T-cell (primary cell): ENCODE measurements at regions of chr13 and their contacts with region 1.

Region 1: DNA sequence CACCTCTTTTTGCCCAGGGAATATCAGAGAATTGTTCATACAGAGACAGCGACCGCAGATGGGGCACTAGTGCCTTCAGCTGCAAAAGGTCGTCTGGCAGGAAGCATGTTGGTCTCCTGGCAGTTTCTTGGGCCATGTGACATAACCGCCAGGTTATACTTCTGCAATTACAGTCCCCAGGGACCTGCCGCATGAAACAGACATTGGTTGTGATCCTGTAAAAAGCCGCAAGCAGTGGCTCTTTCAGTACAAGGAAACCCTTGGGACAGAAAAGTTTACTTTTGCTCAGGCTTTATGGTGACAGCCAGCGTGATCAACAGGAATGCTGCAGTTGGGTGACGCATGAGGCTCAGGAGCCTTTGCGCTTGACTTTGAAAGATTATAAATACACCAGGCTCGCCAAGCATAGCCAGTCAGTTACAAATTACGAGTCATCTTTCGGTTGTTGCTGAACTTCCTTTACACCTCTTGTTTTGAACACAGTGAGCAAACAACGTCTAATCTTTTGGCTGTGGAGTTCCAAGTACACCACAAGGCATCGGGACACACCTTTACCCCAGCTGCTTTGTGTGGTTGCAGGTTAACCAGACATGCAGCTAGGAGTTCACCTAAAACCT is 50.5 kb upstream of the UBE2L5 start:
- DNase-seq: peak; percentile 52 to 89 (median 70)
- ATAC-seq: peak; percentile 63 to 74 (median 68)
- H3K4me3 ChIP-seq: peak overlapping the region in 1 of 2 donors; percentile 17
- H3K4me3 Mint-ChIP-seq: peak overlapping the region; percentile 46 to 79 (median 67)
- H3K27ac ChIP-seq: peak overlapping the region; percentile 74
- H3K27ac Mint-ChIP-seq: peak overlapping the region; percentile 97
- H3K4me1 ChIP-seq: peaks cover 62 to 88% of the 10 kb centered on the region in 2 experiments
- H3K4me1 Mint-ChIP-seq: peaks cover 83 to 87% (median 84%) of the 10 kb centered on the region in 3 donors
- H3K27me3 ChIP-seq: no peaks in the 10 kb centered on the region
- H3K27me3 Mint-ChIP-seq: no peaks in the 10 kb centered on the region

Region 2: GRCh38 chr13:29210676-29211075 is 1161.1 kb before region 1 on chr13:
- CTCF ChIA-PET with region 1: no interaction called
- POLR2A ChIA-PET with region 1: no interaction called
- DNase-seq: no peak
- ATAC-seq: no peak
- H3K4me3 ChIP-seq: no peak overlapping the region
- H3K4me3 Mint-ChIP-seq: no peak overlapping the region
- H3K27ac ChIP-seq: no peak overlapping the region
- H3K27ac Mint-ChIP-seq: no peak overlapping the region
- H3K4me1 ChIP-seq: no peaks in the 10 kb centered on the region
- H3K4me1 Mint-ChIP-seq: no peaks in the 10 kb centered on the region
- H3K27me3 ChIP-seq: no peaks in the 10 kb centered on the region
- H3K27me3 Mint-ChIP-seq: no peaks in the 10 kb centered on the region

Region 3: DNA sequence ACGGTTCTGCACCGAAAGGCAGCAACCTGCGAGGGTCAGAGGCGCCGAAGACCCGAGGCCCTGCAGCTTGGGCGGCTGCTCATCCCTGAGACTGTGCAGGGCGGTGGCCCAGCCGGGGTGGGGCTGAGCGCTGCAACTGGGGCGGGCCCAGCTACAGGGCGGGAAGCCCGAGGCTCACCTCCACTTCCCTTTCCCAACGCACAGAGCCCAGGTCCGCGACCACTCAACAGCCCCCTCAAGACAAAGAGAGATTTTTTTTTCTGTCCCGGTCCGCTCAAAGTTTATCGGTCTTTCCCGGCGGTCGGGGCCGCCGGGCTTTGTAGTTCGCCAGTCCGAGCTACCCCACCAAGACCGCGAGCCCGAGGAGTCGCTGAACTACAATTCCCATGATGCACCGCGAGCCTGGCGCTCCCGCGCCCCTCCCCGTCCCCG is 65.0 kb before region 1 on chr13:
- CTCF ChIA-PET with region 1: interaction called in 1 of 2 experiments, 11 read pairs
- POLR2A ChIA-PET with region 1: no interaction called
- DNase-seq: peak; percentile 70 to 94 (median 85)
- ATAC-seq: peak; percentile 89 to 93 (median 92)
- H3K4me3 ChIP-seq: peak overlapping the region; percentile 79 to 93
- H3K4me3 Mint-ChIP-seq: peak overlapping the region; percentile 77 to 89 (median 87)
- H3K27ac ChIP-seq: peak overlapping the region; percentile 50
- H3K27ac Mint-ChIP-seq: peak overlapping the region; percentile 66 to 88
- H3K4me1 ChIP-seq: peaks cover 6 to 10% of the 10 kb centered on the region in 2 experiments
- H3K4me1 Mint-ChIP-seq: peaks cover 6 to 42% (median 25%) of the 10 kb centered on the region in 3 donors
- H3K27me3 ChIP-seq: no peaks in the 10 kb centered on the region
- H3K27me3 Mint-ChIP-seq: no peaks in the 10 kb centered on the region

Region 4: DNA sequence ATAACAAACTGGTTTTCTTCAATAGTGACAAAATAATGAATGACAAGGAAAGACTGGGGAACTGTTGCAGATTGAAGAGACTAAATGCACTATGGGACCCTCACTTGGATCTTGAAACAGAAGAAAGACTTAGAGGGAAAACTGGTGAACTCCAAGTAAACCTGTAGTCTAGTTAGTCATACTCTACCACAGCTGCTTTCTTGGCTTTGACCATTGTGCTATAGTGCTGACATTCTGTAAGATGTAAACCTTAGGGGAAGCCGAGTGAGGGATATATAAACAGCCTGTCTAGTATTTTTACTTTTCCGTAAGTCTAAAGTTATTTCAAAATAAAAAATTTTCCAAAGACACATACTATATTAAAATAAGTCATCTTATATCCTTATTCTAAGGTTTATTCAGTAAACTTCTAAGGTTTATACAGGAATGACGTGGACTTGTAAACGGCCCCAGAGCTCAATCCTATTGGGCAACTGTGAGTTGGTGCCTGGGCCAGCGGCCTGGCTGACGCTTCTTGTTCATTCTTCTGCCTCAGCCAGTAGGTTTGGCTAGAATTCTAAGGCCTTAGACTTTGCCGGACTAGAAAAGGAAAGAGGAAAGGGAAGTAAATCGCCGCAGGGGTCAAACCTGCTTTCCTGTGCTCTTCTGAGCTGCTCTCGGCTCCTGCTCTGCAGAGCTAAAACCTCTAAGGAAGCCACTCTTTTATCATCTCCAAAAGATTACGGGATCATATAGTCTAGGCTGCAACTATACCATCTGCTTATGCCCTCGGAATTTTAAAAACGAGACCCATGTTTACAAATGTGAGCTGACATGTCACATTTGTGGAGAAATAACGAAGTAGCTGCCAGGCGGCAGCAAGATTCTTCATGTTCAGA is 16.9 kb after region 1 on chr13:
- CTCF ChIA-PET with region 1: interaction called, 4 to 13 read pairs
- POLR2A ChIA-PET with region 1: interaction called, 4 to 7 read pairs
- DNase-seq: no peak
- ATAC-seq: peak; percentile 21 to 55 (median 42)
- H3K4me3 ChIP-seq: peak overlapping the region; percentile 8 to 46
- H3K4me3 Mint-ChIP-seq: peak overlapping the region; percentile 57 to 75 (median 70)
- H3K27ac ChIP-seq: peak overlapping the region; percentile 44
- H3K27ac Mint-ChIP-seq: peak overlapping the region; percentile 91 to 93
- H3K4me1 ChIP-seq: peaks cover 26 to 29% of the 10 kb centered on the region in 2 experiments
- H3K4me1 Mint-ChIP-seq: peaks cover 48 to 65% (median 54%) of the 10 kb centered on the region in 3 donors
- H3K27me3 ChIP-seq: no peaks in the 10 kb centered on the region
- H3K27me3 Mint-ChIP-seq: no peaks in the 10 kb centered on the region

Region 5: DNA sequence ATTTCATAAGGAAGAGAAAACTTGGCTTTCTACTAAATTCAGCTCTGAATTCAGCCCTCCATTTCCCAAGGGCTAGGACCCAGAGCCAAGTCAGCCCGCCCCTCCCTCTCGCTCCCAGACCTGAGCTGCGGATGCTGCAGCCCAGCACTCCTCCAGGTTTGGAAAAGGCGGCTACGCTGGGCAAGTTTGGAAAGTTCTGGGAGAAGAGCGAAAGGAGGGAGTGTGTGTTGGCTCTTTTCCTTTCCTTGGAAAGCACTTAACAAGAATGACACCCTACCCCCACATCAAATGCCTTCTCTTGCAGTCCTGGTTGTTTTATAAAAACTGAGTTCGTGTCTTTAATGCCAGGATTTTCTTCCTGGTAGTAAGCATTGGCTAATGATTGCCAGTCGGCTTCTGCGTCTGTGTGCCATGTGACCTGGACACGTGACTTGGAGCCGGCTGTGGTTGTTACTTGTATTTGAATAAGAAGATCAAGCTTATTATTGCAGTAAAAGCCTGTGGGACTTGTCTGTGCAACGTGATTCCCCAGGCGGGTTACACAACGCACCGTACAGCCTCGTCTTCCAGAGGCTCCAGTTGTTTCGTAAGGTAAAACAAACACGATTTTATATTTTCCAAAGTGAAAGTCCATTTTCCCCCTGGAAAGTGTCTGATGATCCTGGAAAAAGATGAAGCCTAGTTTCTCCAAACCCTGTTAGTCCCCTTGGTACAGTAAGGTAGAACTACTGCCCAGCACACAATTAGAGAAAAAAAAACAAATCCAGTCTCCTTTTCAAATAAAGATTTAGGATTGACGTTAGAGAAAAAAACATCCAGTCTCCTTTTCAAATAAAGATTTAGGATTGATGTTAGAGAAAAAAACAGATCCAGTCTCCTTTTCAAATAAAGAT is 23.7 kb after region 1 on chr13:
- CTCF ChIA-PET with region 1: interaction called, 4 to 13 read pairs
- POLR2A ChIA-PET with region 1: interaction called, 3 to 8 read pairs
- DNase-seq: peak; percentile 35 to 87 (median 76)
- ATAC-seq: peak; percentile 62 to 79 (median 78)
- H3K4me3 ChIP-seq: peak overlapping the region; percentile 79 to 85
- H3K4me3 Mint-ChIP-seq: peak overlapping the region; percentile 73 to 88 (median 85)
- H3K27ac ChIP-seq: peak overlapping the region; percentile 96
- H3K27ac Mint-ChIP-seq: peak overlapping the region; percentile 92 to 97
- H3K4me1 ChIP-seq: peaks cover 21 to 23% of the 10 kb centered on the region in 2 experiments
- H3K4me1 Mint-ChIP-seq: peaks cover 44 to 59% (median 46%) of the 10 kb centered on the region in 3 donors
- H3K27me3 ChIP-seq: no peaks in the 10 kb centered on the region
- H3K27me3 Mint-ChIP-seq: no peaks in the 10 kb centered on the region

Region 6: DNA sequence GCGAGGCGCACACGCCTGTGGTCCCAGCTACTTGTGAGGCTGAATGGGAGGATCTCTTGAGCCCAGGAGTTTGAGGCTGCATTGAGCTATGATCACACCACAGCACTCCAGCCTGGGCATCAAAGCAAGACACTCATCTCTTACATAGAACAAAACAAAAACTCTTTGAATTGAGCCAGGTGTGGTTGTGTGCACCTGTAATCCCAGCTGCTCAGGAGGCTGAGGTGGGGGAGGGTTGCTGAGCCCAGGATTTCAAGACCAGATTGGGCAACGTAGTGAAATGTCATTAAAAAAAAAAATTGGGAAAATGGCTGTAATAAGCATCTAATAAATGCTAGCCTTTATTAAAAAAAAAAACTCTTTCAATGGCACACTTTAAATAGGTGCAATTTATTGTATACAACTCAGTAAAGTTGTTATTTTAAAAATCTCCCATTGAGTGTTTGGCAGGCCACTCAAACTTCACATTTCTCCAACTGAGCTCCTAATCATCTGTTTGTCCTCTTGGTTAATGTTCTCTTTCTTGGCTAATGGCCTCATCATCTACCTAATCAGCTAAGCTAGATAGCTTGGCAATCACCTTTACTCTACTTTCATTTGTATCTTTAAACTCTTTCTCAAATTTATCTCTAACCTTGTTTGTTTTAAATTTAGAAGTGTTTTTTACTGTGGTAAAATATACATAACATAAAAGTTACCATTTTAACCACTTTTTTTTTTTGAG is 122.1 kb after region 1 on chr13:
- CTCF ChIA-PET with region 1: no interaction called
- POLR2A ChIA-PET with region 1: no interaction called
- DNase-seq: no peak
- ATAC-seq: no peak
- H3K4me3 ChIP-seq: no peak overlapping the region
- H3K4me3 Mint-ChIP-seq: no peak overlapping the region
- H3K27ac ChIP-seq: no peak overlapping the region
- H3K27ac Mint-ChIP-seq: no peak overlapping the region
- H3K4me1 ChIP-seq: no peaks in the 10 kb centered on the region
- H3K4me1 Mint-ChIP-seq: no peaks in the 10 kb centered on the region
- H3K27me3 ChIP-seq: no peaks in the 10 kb centered on the region
- H3K27me3 Mint-ChIP-seq: no peaks in the 10 kb centered on the region

Region 7: DNA sequence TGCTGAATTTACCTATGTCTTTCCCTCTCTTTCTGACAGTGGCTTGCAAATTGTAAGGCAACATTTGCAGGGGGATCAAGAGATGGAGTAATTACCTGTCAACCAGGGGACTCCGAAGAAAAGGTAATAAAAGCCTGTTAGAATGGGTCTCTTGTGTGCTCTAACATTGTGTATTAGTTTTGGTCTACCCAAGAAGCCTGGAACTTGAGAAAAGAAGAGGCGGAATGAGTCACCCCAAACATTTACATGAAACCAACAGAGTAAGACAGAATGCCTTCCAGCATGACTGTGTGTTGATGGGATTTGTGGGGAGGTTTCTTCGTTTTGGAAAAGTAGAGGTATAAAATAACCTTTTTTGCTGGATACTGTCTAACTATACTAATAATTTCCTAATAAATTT is 1906.7 kb after region 1 on chr13:
- CTCF ChIA-PET with region 1: no interaction called
- POLR2A ChIA-PET with region 1: no interaction called
- DNase-seq: no peak
- ATAC-seq: no peak
- H3K4me3 ChIP-seq: no peak overlapping the region
- H3K4me3 Mint-ChIP-seq: no peak overlapping the region
- H3K27ac ChIP-seq: no peak overlapping the region
- H3K27ac Mint-ChIP-seq: no peak overlapping the region
- H3K4me1 ChIP-seq: no peaks in the 10 kb centered on the region
- H3K4me1 Mint-ChIP-seq: no peaks in the 10 kb centered on the region
- H3K27me3 ChIP-seq: no peaks in the 10 kb centered on the region
- H3K27me3 Mint-ChIP-seq: no peaks in the 10 kb centered on the region